ENCODE measurements at regions of chr5 and their contacts with region 1.

Region 1: DNA sequence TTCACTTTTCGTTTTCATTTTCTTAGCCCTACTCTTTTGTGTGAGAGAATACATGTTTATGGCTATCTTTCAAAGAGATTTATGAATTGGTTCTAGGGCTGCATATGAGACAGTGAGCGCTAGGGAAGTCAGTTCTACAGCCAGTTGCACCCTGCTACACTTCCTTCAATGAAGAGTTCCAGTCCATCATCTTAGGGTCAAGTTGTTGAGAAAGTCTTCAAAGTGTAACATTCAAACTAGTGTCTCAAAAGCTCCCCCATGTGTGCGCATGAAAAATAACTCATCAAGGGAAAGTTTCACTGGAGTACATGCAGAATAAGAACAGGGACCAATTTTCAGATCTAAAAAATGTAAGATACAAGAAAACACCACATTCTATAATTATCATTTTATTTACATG is 317.2 kb downstream of the DEPDC1B start:
- DNase-seq: no peak
- ATAC-seq: peak; percentile 48
- H3K4me3 ChIP-seq: no peak overlapping the region
- H3K27ac ChIP-seq: peak overlapping the region in 1 of 2 donors; percentile 21
- H3K4me1 ChIP-seq: peaks cover 9 to 15% of the 10 kb centered on the region in 2 donors
- H3K27me3 ChIP-seq: no peaks in the 10 kb centered on the region

Region 2: GRCh38 chr5:59831326-59831989 is 551.3 kb before region 1 on chr5:
- intact Hi-C with region 1: loop called in 1 of 2 experiments (anchors 5 kb)
- DNase-seq: no peak
- ATAC-seq: no peak
- H3K4me3 ChIP-seq: no peak overlapping the region
- H3K27ac ChIP-seq: no peak overlapping the region
- H3K4me1 ChIP-seq: peaks cover 0 to 2% of the 10 kb centered on the region in 2 donors
- H3K27me3 ChIP-seq: no peaks in the 10 kb centered on the region

Region 3: DNA sequence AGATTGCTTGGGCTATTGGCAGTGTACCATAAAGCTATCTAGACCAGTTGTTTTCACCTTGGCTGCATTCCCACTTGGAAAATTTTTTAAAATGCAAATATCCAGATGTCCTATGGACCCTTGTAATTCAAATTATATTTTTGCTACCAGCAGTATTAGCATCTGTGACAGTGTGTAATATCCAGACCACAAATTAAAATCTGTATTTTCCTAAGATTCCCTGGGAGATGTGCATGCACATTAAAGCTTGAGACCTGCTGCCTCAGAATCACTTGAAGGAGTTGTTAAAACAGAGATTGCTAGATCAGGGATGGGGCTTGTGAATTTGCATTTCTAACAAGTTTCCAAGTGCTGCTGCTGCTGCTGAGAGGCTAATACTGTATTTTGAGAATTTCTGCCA is 108.0 kb before region 1 on chr5:
- intact Hi-C with region 1: loop called in 1 of 2 experiments (anchors 5 kb)
- DNase-seq: no peak
- ATAC-seq: no peak
- H3K4me3 ChIP-seq: no peak overlapping the region
- H3K27ac ChIP-seq: no peak overlapping the region
- H3K4me1 ChIP-seq: peaks cover 2 to 12% of the 10 kb centered on the region in 2 donors
- H3K27me3 ChIP-seq: no peaks in the 10 kb centered on the region

Region 4: GRCh38 chr5:60487885-60488442 is 105.2 kb after region 1 on chr5:
- intact Hi-C with region 1: loop called in 1 of 2 experiments (anchors 5 kb)
- DNase-seq: no peak
- ATAC-seq: peak; percentile 32
- H3K4me3 ChIP-seq: peak overlapping the region; percentile 81 to 86
- H3K27ac ChIP-seq: peak overlapping the region; percentile 92 to 94
- H3K4me1 ChIP-seq: peaks cover 2 to 5% of the 10 kb centered on the region in 2 donors
- H3K27me3 ChIP-seq: no peaks in the 10 kb centered on the region

Region 5: DNA sequence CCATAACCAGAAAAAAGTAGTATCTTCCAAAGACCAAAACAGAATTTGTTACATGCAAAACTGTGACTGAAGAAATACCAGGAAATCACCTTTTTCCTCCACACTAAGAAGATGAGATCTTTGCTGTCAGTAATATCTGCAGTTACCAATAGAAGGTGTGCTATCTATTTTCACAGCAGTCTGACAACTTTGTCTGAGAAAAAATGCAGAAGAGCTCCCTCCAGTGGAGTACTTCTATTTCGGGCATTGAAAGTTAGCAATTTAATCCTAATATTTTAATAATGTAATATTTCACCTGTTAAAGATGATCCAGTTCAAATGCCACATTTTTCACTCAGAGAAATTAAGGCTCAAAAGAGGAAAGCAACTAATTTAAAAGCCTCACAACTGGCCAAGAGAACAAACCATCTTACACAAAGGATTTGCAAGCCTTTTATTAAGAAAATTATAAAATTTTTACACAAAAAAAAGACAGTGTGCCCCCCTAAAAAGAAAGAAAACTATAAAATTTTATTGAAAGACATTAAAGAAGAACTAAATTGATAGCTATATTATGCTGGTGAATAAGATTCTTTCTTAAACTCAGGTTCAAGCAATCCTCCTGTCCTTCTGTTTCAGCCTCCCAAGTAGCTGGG is 266.7 kb after region 1 on chr5:
- intact Hi-C with region 1: loop called in 1 of 2 experiments (anchors 10 kb)
- DNase-seq: no peak
- ATAC-seq: no peak
- H3K4me3 ChIP-seq: no peak overlapping the region
- H3K27ac ChIP-seq: no peak overlapping the region
- H3K4me1 ChIP-seq: peaks cover 0 to 4% of the 10 kb centered on the region in 2 donors
- H3K27me3 ChIP-seq: no peaks in the 10 kb centered on the region

Region 6: GRCh38 chr5:60830581-60831127 is 447.9 kb after region 1 on chr5:
- intact Hi-C with region 1: no loop called
- DNase-seq: no peak
- ATAC-seq: no peak
- H3K4me3 ChIP-seq: no peak overlapping the region
- H3K27ac ChIP-seq: no peak overlapping the region
- H3K4me1 ChIP-seq: no peaks in the 10 kb centered on the region
- H3K27me3 ChIP-seq: peaks cover 0 to 2% of the 10 kb centered on the region in 2 donors

Measured in aorta (tissue), 5 donors.